CD4-positive, alpha-beta memory T cell (primary cell): ENCODE measurements at regions of chr11 and their contacts with region 1.

Region 1: DNA sequence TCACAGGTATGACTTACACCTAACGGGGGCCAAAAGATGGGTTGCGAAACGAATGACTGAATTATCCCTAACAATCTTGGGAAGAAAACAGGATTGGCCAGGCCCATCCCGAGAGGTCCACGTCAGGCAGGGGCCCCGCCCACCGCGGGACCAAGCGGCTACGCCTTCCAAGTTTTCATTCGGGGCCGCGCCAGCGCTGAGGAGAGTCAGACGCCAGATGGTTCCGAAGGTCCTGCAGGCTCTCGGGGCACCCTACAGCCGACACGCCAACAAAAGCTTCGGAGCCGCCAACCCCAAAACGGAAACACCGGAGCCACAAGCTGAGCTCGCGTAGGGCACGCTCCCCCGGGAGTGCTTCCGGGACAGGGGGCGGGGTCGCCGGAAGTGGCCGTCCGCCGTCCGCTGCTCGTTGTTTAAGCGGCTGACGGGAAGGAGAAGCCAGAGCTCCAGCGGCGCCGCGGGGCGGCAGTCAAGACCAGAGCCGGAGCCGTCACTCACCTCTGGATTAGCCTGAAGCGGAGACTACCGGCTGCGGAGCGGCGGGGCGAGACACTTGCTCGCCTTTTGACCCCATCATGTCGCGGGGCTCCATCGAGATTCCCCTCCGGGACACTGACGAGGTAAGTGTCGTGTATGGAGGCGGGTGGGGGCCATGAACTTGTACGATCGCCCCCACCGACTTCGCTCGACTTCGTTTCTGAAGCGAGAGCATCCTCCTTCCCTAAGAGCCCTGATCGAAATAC is at the start of gene CTR9:
- DNase-seq: peak; percentile 88 to 91 (median 89)
- H3K4me3 ChIP-seq: peak within 1 kb of the TSS; percentile 95 to 96
- H3K4me3 Mint-ChIP-seq: peak within 1 kb of the TSS; percentile 92 to 98 (median 97)
- H3K27ac ChIP-seq: peak within 1 kb of the TSS; percentile 81
- H3K27ac Mint-ChIP-seq: peak within 1 kb of the TSS; percentile 81 to 97 (median 94)
- H3K4me1 ChIP-seq: peaks cover 29% of the 10 kb centered on the region
- H3K4me1 Mint-ChIP-seq: peaks cover 14 to 46% (median 20%) of the 10 kb centered on the region in 4 donors
- H3K27me3 ChIP-seq: no peaks in the 10 kb centered on the region
- H3K27me3 Mint-ChIP-seq: no peaks in the 10 kb centered on the region
- total RNA-seq, gene CTR9: 57.2 to 68.6 TPM

Region 2: GRCh38 chr11:10398525-10398924 is 352.5 kb before region 1 on chr11:
- CTCF ChIA-PET with region 1: no interaction called
- POLR2A ChIA-PET with region 1: no interaction called
- intact Hi-C with region 1: no loop called
- DNase-seq: no peak
- H3K4me3 ChIP-seq: no peak overlapping the region
- H3K4me3 Mint-ChIP-seq: no peak overlapping the region
- H3K27ac ChIP-seq: no peak overlapping the region
- H3K27ac Mint-ChIP-seq: no peak overlapping the region
- H3K4me1 ChIP-seq: peaks cover 15% of the 10 kb centered on the region
- H3K4me1 Mint-ChIP-seq: peaks cover 10 to 16% (median 14%) of the 10 kb centered on the region in 4 donors
- H3K27me3 ChIP-seq: no peaks in the 10 kb centered on the region
- H3K27me3 Mint-ChIP-seq: peaks cover 4 to 5% of the 10 kb centered on the region in 2 donors

Region 3: GRCh38 chr11:10641177-10641911 is 109.7 kb before region 1 on chr11:
- CTCF ChIA-PET with region 1: no interaction called
- POLR2A ChIA-PET with region 1: no interaction called
- intact Hi-C with region 1: no loop called
- DNase-seq: no peak
- H3K4me3 ChIP-seq: no peak overlapping the region
- H3K4me3 Mint-ChIP-seq: no peak overlapping the region
- H3K27ac ChIP-seq: no peak overlapping the region
- H3K27ac Mint-ChIP-seq: no peak overlapping the region
- H3K4me1 ChIP-seq: no peaks in the 10 kb centered on the region
- H3K4me1 Mint-ChIP-seq: no peaks in the 10 kb centered on the region
- H3K27me3 ChIP-seq: no peaks in the 10 kb centered on the region
- H3K27me3 Mint-ChIP-seq: peaks cover 0 to 1% of the 10 kb centered on the region in 2 donors

Region 4: DNA sequence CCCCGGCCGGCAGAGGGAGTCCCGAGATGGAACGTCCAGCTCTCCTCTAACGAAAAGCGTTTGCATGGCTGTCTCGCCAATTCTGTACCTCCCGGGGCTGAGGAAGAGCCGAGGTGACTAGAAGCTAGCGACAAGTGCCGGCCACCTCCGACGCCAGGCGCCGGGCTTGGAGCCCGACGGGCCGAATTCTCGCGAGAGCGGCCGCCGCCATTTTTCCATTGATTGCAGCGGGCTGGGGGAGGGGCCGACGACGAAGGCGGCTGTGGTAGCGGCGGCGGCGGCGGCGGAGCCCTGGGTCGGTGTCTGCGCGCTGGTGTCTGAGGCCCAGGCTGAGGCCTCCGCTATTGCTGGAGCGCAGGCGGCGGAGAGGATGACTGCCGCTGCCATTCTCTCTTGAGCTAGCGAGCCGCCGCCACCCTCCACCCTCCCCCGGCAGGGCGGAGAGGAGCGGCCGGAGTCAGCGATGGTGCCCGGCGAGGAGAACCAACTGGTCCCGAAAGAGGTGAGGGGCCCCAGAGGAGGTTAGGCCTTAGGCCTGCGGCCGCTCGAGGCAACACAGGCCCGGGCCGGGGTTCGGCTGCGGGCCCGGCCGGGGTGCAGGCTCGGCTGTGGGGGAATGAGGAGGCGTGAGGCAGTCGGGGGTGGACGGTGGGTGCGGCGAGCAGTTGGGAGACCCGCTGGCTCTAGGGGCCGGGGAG is 1090.9 kb after region 1 on chr11 and contains the start of gene USP47:
- CTCF ChIA-PET with region 1: no interaction called
- POLR2A ChIA-PET with region 1: interaction called, 3 read pairs
- intact Hi-C with region 1: loop called (anchors 5 kb)
- DNase-seq: peak; percentile 91 to 96 (median 95)
- H3K4me3 ChIP-seq: peak within 1 kb of the TSS; percentile 27 to 85
- H3K4me3 Mint-ChIP-seq: peak within 1 kb of the TSS in 1 of 8 donors; percentile 86
- H3K27ac ChIP-seq: peak within 1 kb of the TSS; percentile 98
- H3K27ac Mint-ChIP-seq: peak within 1 kb of the TSS in 4 of 7 donors; percentile 88 to 90 (median 90)
- H3K4me1 ChIP-seq: peaks cover 39% of the 10 kb centered on the region
- H3K4me1 Mint-ChIP-seq: peaks cover 0 to 24% (median 2%) of the 10 kb centered on the region in 4 donors
- H3K27me3 ChIP-seq: no peaks in the 10 kb centered on the region
- H3K27me3 Mint-ChIP-seq: peaks cover 8 to 11% of the 10 kb centered on the region in 2 donors
- total RNA-seq, gene USP47: 62.2 to 65.9 TPM